Aorta (tissue), 5 donors: ENCODE measurements at regions of chr15 and their contacts with region 1.

Region 1: DNA sequence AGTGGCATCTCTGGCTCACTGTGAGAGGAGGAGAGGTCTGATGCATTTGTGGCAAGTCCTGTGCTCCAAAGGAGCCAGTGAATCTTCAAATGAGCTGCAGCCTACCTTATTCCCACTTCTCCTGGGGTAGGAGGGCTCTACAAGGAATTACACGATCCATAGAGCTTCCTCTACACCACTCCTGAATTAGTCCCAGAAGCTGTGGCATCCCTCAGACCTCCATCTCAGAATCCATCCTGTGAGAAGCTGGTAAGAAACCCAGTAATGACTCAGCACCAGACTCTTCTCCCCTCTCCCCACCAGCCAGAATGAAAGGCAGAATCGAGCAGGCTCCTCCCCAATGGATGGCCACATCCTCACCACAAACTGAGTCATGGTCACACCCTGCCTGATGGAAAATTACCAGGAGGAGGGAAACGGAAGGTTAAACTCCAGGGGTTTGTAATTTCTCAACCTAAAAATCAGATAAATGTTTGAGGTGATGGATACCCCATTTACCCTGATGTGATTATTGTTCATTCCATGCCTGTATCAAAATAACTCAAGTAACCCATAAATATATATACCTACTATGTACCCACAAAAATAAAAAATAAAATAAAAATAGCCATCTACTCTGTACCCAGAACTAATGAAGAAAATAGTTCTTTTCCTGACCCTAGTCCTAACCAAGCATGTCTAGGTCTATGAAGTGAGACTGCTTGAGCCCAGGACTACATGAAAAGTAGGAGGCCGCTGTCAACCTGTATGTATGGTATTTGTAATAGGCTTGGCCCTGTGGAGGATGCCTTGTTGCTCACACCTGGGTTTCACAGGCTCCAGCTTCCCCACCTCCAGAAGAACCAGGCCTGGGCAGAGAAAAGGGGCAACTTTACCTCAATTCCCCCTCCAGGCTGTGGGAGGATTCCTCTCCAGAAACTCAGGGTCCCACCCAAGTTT is 6.6 kb upstream of the PKM start:
- DNase-seq: peak; percentile 80 to 89
- ATAC-seq: peak; percentile 84
- H3K4me3 ChIP-seq: no peak overlapping the region
- H3K27ac ChIP-seq: peak overlapping the region in 1 of 2 donors; percentile 64
- H3K4me1 ChIP-seq: no peaks in the 10 kb centered on the region
- H3K27me3 ChIP-seq: no peaks in the 10 kb centered on the region

Region 2: GRCh38 chr15:72117486-72118399 is 119.8 kb before region 1 on chr15 and contains the start of gene MYO9A:
- intact Hi-C with region 1: loop called in 1 of 2 experiments (anchors 5 kb)
- DNase-seq: peak; percentile 98 to 100
- ATAC-seq: peak; percentile 96
- H3K4me3 ChIP-seq: peak within 1 kb of the TSS; percentile 62 to 72
- H3K27ac ChIP-seq: peak within 1 kb of the TSS; percentile 45 to 89
- H3K4me1 ChIP-seq: peaks cover 1 to 7% of the 10 kb centered on the region in 2 donors
- H3K27me3 ChIP-seq: no peaks in the 10 kb centered on the region
- total RNA-seq, gene MYO9A: 79.3 to 93.7 TPM

Region 3: DNA sequence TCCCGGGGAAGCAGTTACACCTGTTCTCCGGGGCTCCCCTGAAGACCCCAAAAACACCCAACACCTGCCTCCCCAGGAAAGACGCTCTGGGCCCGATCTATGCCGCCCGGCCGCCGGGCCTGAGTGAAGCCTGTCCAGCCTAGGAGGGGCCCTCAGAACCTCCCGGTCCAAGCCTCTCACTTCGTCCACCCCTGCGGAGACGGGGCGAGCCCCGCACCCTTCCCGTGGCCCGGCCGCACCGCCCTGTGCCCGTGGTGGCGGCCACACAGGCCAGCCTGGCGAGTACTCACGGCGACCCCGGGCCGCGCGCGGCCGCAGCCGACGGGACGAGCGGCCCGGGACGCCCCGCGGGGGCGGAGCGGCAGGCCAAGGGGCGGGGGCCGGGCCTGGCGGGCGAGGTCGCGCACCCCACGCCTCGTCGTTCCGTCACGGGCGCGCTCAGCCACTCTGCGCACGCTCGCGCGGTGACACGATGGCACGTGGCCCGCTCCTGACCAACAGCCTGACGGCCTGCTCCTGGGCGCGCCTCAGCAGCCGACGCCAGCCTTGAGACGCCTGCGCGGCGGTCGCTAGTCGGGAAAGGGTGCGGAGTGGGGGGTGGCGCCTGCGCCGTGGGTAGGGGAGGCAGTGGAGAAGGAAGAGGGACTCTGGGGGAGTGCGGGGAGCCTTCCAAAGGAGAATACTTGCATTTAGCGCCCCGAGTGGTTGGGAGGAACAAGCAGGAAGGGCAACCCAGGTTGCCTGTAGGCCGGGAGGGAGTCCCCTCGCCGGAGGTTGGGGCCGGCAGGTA is 34.9 kb after region 1 on chr15 and contains the start of gene PARP6:
- intact Hi-C with region 1: no loop called
- DNase-seq: peak; percentile 100
- ATAC-seq: peak; percentile 100
- H3K4me3 ChIP-seq: peak within 1 kb of the TSS; percentile 73 to 94
- H3K27ac ChIP-seq: peak within 1 kb of the TSS; percentile 7 to 37
- H3K4me1 ChIP-seq: no peaks in the 10 kb centered on the region
- H3K27me3 ChIP-seq: no peaks in the 10 kb centered on the region
- total RNA-seq, gene PARP6: 63.1 to 72.2 TPM